Ovary (tissue), 10 donors: ENCODE measurements at regions of chr21 and their contacts with region 1.

Region 1: DNA sequence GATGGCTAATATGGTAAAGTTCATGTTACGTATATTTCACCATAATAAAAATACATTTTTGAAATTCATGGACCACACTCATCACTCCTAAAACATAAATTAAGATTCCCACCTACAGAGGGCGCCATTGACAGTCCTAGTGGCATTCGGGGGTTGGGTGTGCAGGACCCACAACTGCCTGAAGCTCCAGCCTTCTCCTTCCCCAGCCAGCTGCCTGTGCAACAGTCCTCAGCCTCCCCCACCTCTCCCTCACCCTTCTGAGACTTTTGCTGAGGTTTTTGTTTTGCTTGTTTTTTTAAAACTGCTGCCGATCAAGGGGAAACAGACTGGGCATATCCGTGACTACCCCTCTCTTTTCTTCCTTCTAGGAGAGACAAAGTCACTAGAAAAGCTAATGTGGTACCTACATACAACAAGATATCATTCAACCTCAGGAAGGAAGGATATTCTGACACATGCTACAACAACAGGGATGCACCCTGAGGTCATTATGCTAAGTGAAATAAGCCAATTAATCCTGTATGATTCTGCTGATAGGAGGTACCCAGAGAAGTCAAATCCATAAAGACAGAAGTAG is 9.2 kb upstream of the EVA1C start:
- DNase-seq: peak; percentile 66 to 80 (median 72)
- H3K4me3 ChIP-seq: no peak overlapping the region
- H3K27ac ChIP-seq: no peak overlapping the region
- H3K4me1 ChIP-seq: no peaks in the 10 kb centered on the region
- H3K27me3 ChIP-seq: no peaks in the 10 kb centered on the region
- CTCF ChIP-seq: peak; percentile 58 to 79 (median 76)
- EP300 ChIP-seq: no peak
- POLR2A ChIP-seq: no peak

Region 2: GRCh38 chr21:32494934-32495703 is 91.8 kb after region 1 on chr21:
- intact Hi-C with region 1: loop called in 1 of 4 experiments (anchors 10 kb)
- DNase-seq: peak in 1 of 5 donors; percentile 11
- H3K4me3 ChIP-seq: no peak overlapping the region
- H3K27ac ChIP-seq: no peak overlapping the region
- H3K4me1 ChIP-seq: peaks cover 6% of the 10 kb centered on the region
- H3K27me3 ChIP-seq: no peaks in the 10 kb centered on the region
- CTCF ChIP-seq: no peak
- EP300 ChIP-seq: no peak
- POLR2A ChIP-seq: no peak

Region 3: DNA sequence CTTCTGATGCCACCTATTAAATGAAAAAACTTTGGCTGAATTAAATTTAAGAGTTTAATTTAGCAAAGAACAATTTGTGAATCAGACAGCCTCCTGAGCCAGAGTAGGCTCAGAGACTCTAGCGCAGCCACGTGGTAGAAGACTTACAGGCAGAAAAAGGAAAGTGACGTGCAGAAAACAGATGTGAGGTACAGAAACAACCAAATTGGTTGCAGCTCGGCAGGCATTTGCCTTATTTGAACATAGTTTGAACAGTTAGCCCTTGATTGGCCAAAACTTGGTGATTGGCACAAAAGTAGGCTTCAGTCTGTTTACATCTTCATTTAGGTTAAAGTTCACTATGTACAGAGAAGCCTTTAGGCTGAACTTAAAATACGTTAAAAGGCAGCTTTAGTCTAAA is 159.1 kb after region 1 on chr21:
- intact Hi-C with region 1: loop called in 2 of 4 experiments (anchors 5 kb)
- DNase-seq: peak; percentile 55 to 73 (median 63)
- H3K4me3 ChIP-seq: no peak overlapping the region
- H3K27ac ChIP-seq: peak overlapping the region in 1 of 2 donors; percentile 28
- H3K4me1 ChIP-seq: peaks cover 1% of the 10 kb centered on the region
- H3K27me3 ChIP-seq: no peaks in the 10 kb centered on the region
- CTCF ChIP-seq: peak in 2 of 3 donors; percentile 46 to 55
- EP300 ChIP-seq: no peak
- POLR2A ChIP-seq: no peak

Region 4: DNA sequence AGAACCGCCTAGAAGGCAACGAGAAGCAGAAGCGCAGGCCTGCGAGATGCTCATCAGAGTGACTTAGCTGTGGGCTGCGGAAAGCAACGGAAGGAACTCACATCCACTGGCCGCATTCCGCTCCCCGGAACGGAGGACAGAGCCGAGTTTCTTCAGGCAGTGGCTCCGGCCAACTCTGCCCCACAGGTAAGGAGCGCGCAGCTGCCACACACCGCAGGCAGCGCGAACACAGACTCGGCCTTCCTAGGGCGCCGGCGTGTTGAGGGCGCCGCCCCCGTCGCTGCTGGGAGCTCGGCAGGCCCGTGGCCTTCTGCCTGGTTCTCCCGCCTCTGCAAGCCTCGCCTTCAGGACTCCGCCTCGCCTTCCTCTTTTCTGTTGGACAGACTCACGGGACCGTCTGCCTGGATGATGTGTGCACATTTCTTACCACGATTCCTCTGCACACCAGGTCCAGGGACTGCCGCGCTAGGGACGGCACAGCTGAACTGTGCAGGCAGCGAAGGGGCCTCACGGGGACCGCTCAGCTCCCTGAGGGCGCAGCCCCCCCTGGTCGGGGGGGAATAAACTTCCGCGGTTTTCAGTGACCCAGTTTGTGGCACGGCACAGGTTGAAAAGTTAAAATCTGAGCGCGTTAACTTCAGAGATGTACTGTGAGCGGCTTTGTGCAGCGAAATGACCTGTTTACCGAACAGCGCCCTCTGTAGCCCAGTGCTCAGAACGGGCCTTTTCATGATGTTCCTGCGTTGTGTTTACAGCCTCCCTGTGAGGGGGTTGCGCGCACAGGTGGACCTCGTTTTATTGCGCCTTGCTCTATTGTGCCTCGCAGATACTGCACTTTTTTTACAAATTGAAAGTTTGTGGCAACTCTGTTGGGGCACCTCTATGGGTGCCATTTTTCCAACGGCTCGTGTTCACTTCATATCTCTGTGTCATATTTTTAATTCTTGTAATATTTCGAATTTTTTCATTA is 166.3 kb after region 1 on chr21:
- intact Hi-C with region 1: loop called in 3 of 4 experiments (anchors 2 to 5 kb)
- DNase-seq: peak; percentile 71 to 86 (median 80)
- H3K4me3 ChIP-seq: peak overlapping the region; percentile 48
- H3K27ac ChIP-seq: peak overlapping the region; percentile 26 to 77
- H3K4me1 ChIP-seq: peaks cover 4% of the 10 kb centered on the region
- H3K27me3 ChIP-seq: no peaks in the 10 kb centered on the region
- CTCF ChIP-seq: peak; percentile 68 to 75 (median 75)
- EP300 ChIP-seq: no peak
- POLR2A ChIP-seq: no peak

Region 5: GRCh38 chr21:32597205-32597604 is 193.9 kb after region 1 on chr21:
- intact Hi-C with region 1: loop called in 3 of 4 experiments (anchors 2 to 10 kb)
- DNase-seq: no peak
- H3K4me3 ChIP-seq: no peak overlapping the region
- H3K27ac ChIP-seq: no peak overlapping the region
- H3K4me1 ChIP-seq: no peaks in the 10 kb centered on the region
- H3K27me3 ChIP-seq: no peaks in the 10 kb centered on the region
- CTCF ChIP-seq: no peak
- EP300 ChIP-seq: no peak
- POLR2A ChIP-seq: no peak

Region 6: GRCh38 chr21:32604464-32604863 is 201.2 kb after region 1 on chr21:
- intact Hi-C with region 1: loop called in 3 of 4 experiments (anchors 2 to 10 kb)
- DNase-seq: no peak
- H3K4me3 ChIP-seq: no peak overlapping the region
- H3K27ac ChIP-seq: no peak overlapping the region
- H3K4me1 ChIP-seq: no peaks in the 10 kb centered on the region
- H3K27me3 ChIP-seq: no peaks in the 10 kb centered on the region
- CTCF ChIP-seq: no peak
- EP300 ChIP-seq: no peak
- POLR2A ChIP-seq: no peak